Activated CD4-positive, alpha-beta memory T cell treated with anti-CD3 and anti-CD28 coated beads for 36 hours (primary cell): ENCODE measurements at regions of chr16 and their contacts with region 1.

Region 1: GRCh38 chr16:12781777-12782176 is 21.9 kb downstream of the CPPED1 start:
- DNase-seq: peak; percentile 73
- H3K4me3 Mint-ChIP-seq: no peak overlapping the region
- H3K27ac Mint-ChIP-seq: peak overlapping the region; percentile 64
- H3K4me1 Mint-ChIP-seq: peaks cover 9% of the 10 kb centered on the region
- H3K27me3 Mint-ChIP-seq: no peaks in the 10 kb centered on the region

Region 2: DNA sequence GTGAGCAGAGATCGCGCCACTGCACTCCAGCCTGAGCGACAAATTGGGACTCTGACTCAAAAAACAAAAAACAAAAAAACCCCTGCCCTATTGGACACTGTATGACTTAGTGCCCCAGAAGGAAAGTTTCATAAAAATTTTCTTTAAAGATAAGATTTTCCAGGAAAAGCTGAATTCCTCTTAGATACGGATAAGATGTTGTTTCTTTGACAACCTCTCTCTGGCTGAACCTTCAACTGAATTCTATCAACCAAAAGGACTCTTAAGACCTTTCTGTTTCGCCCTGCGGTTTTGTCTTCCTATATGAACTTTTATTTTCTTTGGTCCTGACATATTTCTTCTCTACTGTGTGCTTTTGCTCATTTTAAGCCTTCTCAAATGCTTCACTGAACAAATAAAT is 13.9 kb before region 1 on chr16:
- CTCF ChIA-PET with region 1: interaction called, 4 read pairs
- POLR2A ChIA-PET with region 1: no interaction called
- intact Hi-C with region 1: loop called (anchors 1 kb)
- DNase-seq: no peak
- H3K4me3 Mint-ChIP-seq: no peak overlapping the region
- H3K27ac Mint-ChIP-seq: peak overlapping the region; percentile 11
- H3K4me1 Mint-ChIP-seq: peaks cover 17% of the 10 kb centered on the region
- H3K27me3 Mint-ChIP-seq: no peaks in the 10 kb centered on the region